WTC11 (cell line): ENCODE measurements at regions of chr1 and their contacts with region 1.

Region 1: DNA sequence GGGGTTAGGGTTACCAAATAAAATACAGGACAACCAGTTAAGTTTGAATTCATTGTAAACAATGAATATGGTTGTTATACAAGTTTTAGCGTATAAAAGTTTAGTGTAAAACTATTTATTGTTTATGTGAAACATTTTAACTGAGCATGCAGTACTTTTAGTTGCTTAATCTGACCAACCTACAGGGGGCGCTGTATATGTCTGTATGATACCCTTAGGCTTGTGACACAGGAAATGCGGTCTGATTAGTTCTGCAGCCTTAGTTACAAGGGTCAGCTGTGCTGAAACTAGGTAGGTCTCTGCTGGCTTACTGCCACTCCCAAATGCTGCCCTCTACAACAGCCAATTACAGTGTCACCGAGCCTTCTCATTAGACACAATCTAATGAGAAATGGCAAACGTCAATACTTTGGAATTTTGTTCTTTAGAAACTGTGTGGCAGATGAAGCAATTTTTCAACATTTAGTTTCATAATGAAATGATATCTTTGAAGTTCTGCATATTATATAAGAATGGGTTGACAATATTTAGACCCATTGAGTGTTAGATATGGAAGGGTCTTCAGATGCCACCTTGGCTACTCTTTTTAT is 56.2 kb downstream of the NTNG1 start:
- DNase-seq: peak; percentile 49
- ATAC-seq: peak; percentile 87
- H3K4me3 Mint-ChIP-seq: no peak overlapping the region
- H3K27ac Mint-ChIP-seq: no peak overlapping the region
- H3K4me1 Mint-ChIP-seq: peaks cover 5% of the 10 kb centered on the region
- H3K27me3 Mint-ChIP-seq: no peaks in the 10 kb centered on the region
- CTCF ChIP-seq: peak; percentile 79

Region 2: GRCh38 chr1:107009281-107009680 is 187.8 kb before region 1 on chr1:
- CTCF ChIA-PET with region 1: no interaction called
- POLR2A ChIA-PET with region 1: no interaction called
- DNase-seq: no peak
- ATAC-seq: no peak
- H3K4me3 Mint-ChIP-seq: no peak overlapping the region
- H3K27ac Mint-ChIP-seq: no peak overlapping the region
- H3K4me1 Mint-ChIP-seq: no peaks in the 10 kb centered on the region
- H3K27me3 Mint-ChIP-seq: no peaks in the 10 kb centered on the region
- CTCF ChIP-seq: no peak

Region 3: DNA sequence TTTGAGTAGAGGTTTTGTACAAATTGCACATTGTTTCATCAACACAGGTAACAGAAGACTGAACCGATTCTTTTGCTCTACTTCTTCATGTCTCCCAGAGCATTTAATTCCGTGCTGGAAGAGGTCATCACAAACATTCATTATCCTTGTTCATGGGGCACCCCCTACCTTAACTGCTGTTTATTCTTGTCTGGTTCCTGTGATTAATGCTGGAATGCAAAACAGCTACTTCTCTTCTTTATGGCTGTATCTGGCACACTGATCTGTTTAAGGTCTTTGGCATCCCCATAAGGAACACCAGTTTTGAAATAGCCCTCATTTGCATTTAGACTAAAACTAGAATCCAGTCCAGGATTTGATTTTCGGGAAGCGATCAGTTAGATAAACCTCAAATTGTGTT is 14.1 kb before region 1 on chr1:
- CTCF ChIA-PET with region 1: interaction called, 20 read pairs
- POLR2A ChIA-PET with region 1: no interaction called
- DNase-seq: no peak
- ATAC-seq: no peak
- H3K4me3 Mint-ChIP-seq: no peak overlapping the region
- H3K27ac Mint-ChIP-seq: peak overlapping the region; percentile 22; the same call in 1 of the 2 replicates
- H3K4me1 Mint-ChIP-seq: peaks cover 71% of the 10 kb centered on the region
- H3K27me3 Mint-ChIP-seq: no peaks in the 10 kb centered on the region
- CTCF ChIP-seq: no peak

Region 4: GRCh38 chr1:107225706-107226105 is 28.6 kb after region 1 on chr1:
- CTCF ChIA-PET with region 1: interaction called, 10 read pairs
- POLR2A ChIA-PET with region 1: no interaction called
- DNase-seq: no peak
- ATAC-seq: peak; percentile 77
- H3K4me3 Mint-ChIP-seq: no peak overlapping the region; the same call in 1 of the 2 replicates
- H3K27ac Mint-ChIP-seq: no peak overlapping the region
- H3K4me1 Mint-ChIP-seq: peaks cover 60% of the 10 kb centered on the region
- H3K27me3 Mint-ChIP-seq: no peaks in the 10 kb centered on the region
- CTCF ChIP-seq: no peak

Region 5: GRCh38 chr1:107254299-107254698 is 57.2 kb after region 1 on chr1:
- CTCF ChIA-PET with region 1: interaction called, 13 read pairs
- POLR2A ChIA-PET with region 1: no interaction called
- DNase-seq: peak; percentile 28
- ATAC-seq: peak; percentile 96
- H3K4me3 Mint-ChIP-seq: no peak overlapping the region
- H3K27ac Mint-ChIP-seq: no peak overlapping the region
- H3K4me1 Mint-ChIP-seq: peaks cover 59% of the 10 kb centered on the region
- H3K27me3 Mint-ChIP-seq: no peaks in the 10 kb centered on the region
- CTCF ChIP-seq: no peak